Sciatic nerve (tissue), 2 donors: ENCODE measurements at regions of chr18 and their contacts with region 1.

Region 1: GRCh38 chr18:35040988-35041814 is at the start of gene MAPRE2:
- DNase-seq: peak; percentile 100
- ATAC-seq: peak; percentile 99
- total RNA-seq, gene MAPRE2: 51.8 TPM

Region 2: GRCh38 chr18:34352385-34353163 is 688.6 kb before region 1 on chr18:
- intact Hi-C with region 1: loop called (anchors 5 kb)
- DNase-seq: no peak
- ATAC-seq: no peak